ENCODE measurements at regions of chrX and their contacts with region 1.

Region 1: DNA sequence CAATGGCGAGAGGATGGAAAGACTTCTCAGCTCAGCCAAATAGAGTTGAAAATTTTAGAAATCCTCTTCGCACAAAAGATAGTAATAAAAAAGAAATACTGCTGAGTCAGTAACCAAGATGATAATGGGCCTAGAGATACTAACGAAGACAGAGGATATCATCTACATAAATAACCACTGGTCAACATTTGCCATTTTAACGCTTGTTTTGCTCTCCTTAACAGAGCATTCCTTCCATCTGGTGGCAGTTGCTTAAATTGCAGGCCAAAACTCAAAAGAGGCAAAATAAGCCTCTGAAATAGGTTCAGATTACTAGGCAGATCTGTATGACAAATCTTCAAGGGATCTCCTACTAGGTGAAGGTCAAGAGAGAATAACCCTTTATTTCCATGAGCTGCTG is 51.7 kb upstream of the MCF2 start:
- DNase-seq: no peak
- ATAC-seq: no peak
- H3K4me3 ChIP-seq: no peak overlapping the region
- H3K4me3 Mint-ChIP-seq: no peak overlapping the region
- H3K27ac ChIP-seq: no peak overlapping the region
- H3K27ac Mint-ChIP-seq: no peak overlapping the region
- H3K4me1 ChIP-seq: no peaks in the 10 kb centered on the region
- H3K4me1 Mint-ChIP-seq: no peaks in the 10 kb centered on the region
- H3K27me3 ChIP-seq: no peaks in the 10 kb centered on the region
- H3K27me3 Mint-ChIP-seq: no peaks in the 10 kb centered on the region

Region 2: DNA sequence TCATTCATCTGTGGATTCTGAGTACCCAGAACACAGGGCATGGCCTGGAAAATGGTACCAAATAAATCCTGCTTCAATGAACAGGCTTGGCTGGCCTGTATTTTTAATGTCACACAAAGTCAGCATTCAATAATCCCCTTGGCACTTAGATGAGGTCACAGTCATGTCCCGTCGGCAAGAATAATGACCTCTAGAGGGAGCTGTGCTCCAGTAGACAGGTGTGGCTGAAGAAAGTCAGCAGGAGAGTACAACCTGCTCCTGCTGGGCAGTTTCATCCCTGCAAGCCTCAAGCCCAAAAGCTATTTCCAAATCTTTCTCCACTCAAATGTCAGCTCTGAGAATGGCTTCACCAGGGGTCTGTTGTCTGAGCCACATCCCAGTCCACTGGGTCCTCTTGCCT is 633.1 kb before region 1 on chrX:
- CTCF ChIA-PET with region 1: no interaction called
- POLR2A ChIA-PET with region 1: no interaction called
- intact Hi-C with region 1: loop called in 1 of 2 experiments (anchors 5 kb)
- DNase-seq: no peak
- ATAC-seq: no peak
- H3K4me3 ChIP-seq: no peak overlapping the region
- H3K4me3 Mint-ChIP-seq: no peak overlapping the region
- H3K27ac ChIP-seq: no peak overlapping the region
- H3K27ac Mint-ChIP-seq: no peak overlapping the region
- H3K4me1 ChIP-seq: no peaks in the 10 kb centered on the region
- H3K4me1 Mint-ChIP-seq: no peaks in the 10 kb centered on the region
- H3K27me3 ChIP-seq: no peaks in the 10 kb centered on the region
- H3K27me3 Mint-ChIP-seq: peaks cover 0 to 7% (median 0%) of the 10 kb centered on the region in 5 donors

Region 3: DNA sequence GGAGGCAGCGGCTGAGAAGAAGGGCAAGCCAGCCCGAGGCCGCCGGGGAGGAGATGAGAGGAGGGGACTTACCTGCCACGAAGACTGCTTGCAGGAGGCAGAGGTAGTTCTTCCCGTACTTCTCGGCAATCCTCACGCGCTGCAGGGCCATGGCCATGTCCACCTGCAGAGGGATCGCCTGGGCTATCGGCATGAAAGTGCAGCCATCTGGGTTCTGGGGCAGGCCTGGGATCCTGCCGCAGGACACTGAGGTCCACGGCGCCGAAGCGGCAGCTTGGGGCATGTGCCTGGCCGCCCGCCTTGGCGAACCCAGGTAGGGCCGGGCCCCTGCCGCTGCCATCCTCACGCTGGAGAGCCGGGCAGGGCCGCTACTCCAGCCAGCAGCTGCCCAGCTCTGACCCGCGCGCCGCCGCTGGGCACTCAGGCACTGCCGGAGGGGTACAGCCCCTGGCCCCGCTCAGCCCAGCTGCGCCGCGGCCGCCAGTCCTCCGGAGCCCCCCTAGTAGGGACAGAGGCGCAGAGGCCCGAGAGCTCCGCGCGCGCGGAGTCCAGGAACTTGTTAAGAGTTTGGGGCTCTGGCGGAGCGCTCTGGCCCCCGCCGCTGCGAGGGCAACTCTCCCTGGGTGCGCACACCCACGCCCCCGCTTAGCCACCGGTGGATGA is 67.7 kb before region 1 on chrX:
- CTCF ChIA-PET with region 1: no interaction called
- POLR2A ChIA-PET with region 1: no interaction called
- intact Hi-C with region 1: loop called in 1 of 2 experiments (anchors 10 kb)
- DNase-seq: peak in 1 of 9 donors; percentile 0
- ATAC-seq: no peak
- H3K4me3 ChIP-seq: no peak overlapping the region
- H3K4me3 Mint-ChIP-seq: peak overlapping the region in 1 of 10 donors; percentile 75
- H3K27ac ChIP-seq: no peak overlapping the region
- H3K27ac Mint-ChIP-seq: no peak overlapping the region
- H3K4me1 ChIP-seq: no peaks in the 10 kb centered on the region
- H3K4me1 Mint-ChIP-seq: peaks cover 0 to 8% (median 3%) of the 10 kb centered on the region in 7 donors
- H3K27me3 ChIP-seq: no peaks in the 10 kb centered on the region
- H3K27me3 Mint-ChIP-seq: peaks cover 8 to 42% (median 12%) of the 10 kb centered on the region in 5 donors

Region 4: GRCh38 chrX:139881130-139881529 is 121.5 kb after region 1 on chrX:
- CTCF ChIA-PET with region 1: no interaction called
- POLR2A ChIA-PET with region 1: no interaction called
- intact Hi-C with region 1: no loop called
- DNase-seq: no peak
- ATAC-seq: no peak
- H3K4me3 ChIP-seq: no peak overlapping the region
- H3K4me3 Mint-ChIP-seq: no peak overlapping the region
- H3K27ac ChIP-seq: no peak overlapping the region
- H3K27ac Mint-ChIP-seq: no peak overlapping the region
- H3K4me1 ChIP-seq: no peaks in the 10 kb centered on the region
- H3K4me1 Mint-ChIP-seq: peaks cover 0 to 49% (median 15%) of the 10 kb centered on the region in 7 donors
- H3K27me3 ChIP-seq: no peaks in the 10 kb centered on the region
- H3K27me3 Mint-ChIP-seq: no peaks in the 10 kb centered on the region